ENCODE measurements at regions of chr18 and their contacts with region 1.

Region 1: GRCh38 chr18:48951448-48952286 is 902 bp upstream of the SMAD7 start:
- DNase-seq: peak; percentile 92 to 97 (median 96)
- ATAC-seq: peak; percentile 79 to 82
- H3K4me3 ChIP-seq: peak overlapping the region; percentile 86
- H3K27ac ChIP-seq: peak overlapping the region; percentile 95
- H3K4me1 ChIP-seq: peaks cover 13% of the 10 kb centered on the region
- H3K27me3 ChIP-seq: no peaks in the 10 kb centered on the region

Region 2: GRCh38 chr18:48680339-48681221 is 271.1 kb before region 1 on chr18:
- intact Hi-C with region 1: loop called in 1 of 4 experiments (anchors 5 kb)
- DNase-seq: peak; percentile 95 to 98 (median 97)
- ATAC-seq: peak; percentile 95
- H3K4me3 ChIP-seq: no peak overlapping the region
- H3K27ac ChIP-seq: peak overlapping the region; percentile 93
- H3K4me1 ChIP-seq: peaks cover 24% of the 10 kb centered on the region
- H3K27me3 ChIP-seq: no peaks in the 10 kb centered on the region

Region 3: GRCh38 chr18:48711651-48712486 is 239.8 kb before region 1 on chr18:
- intact Hi-C with region 1: loop called in 2 of 4 experiments (anchors 10 kb)
- DNase-seq: peak; percentile 67 to 83 (median 78)
- ATAC-seq: peak; percentile 69 to 72
- H3K4me3 ChIP-seq: no peak overlapping the region
- H3K27ac ChIP-seq: peak overlapping the region; percentile 39
- H3K4me1 ChIP-seq: peaks cover 32% of the 10 kb centered on the region
- H3K27me3 ChIP-seq: no peaks in the 10 kb centered on the region

Region 4: GRCh38 chr18:48777026-48777743 is 174.5 kb before region 1 on chr18:
- intact Hi-C with region 1: loop called in 3 of 4 experiments (anchors 2 to 5 kb)
- DNase-seq: peak; percentile 68 to 90 (median 89)
- ATAC-seq: peak in 1 of 2 donors; percentile 4
- H3K4me3 ChIP-seq: no peak overlapping the region
- H3K27ac ChIP-seq: peak overlapping the region; percentile 76
- H3K4me1 ChIP-seq: peaks cover 41% of the 10 kb centered on the region
- H3K27me3 ChIP-seq: no peaks in the 10 kb centered on the region

Region 5: GRCh38 chr18:48827291-48828193 is 124.1 kb before region 1 on chr18:
- intact Hi-C with region 1: loop called in 2 of 4 experiments (anchors 10 kb)
- DNase-seq: peak in 2 of 3 donors; percentile 8 to 56
- ATAC-seq: peak; percentile 67 to 69
- H3K4me3 ChIP-seq: peak overlapping the region; percentile 9
- H3K27ac ChIP-seq: peak overlapping the region; percentile 80
- H3K4me1 ChIP-seq: peaks cover 40% of the 10 kb centered on the region
- H3K27me3 ChIP-seq: no peaks in the 10 kb centered on the region

Region 6: DNA sequence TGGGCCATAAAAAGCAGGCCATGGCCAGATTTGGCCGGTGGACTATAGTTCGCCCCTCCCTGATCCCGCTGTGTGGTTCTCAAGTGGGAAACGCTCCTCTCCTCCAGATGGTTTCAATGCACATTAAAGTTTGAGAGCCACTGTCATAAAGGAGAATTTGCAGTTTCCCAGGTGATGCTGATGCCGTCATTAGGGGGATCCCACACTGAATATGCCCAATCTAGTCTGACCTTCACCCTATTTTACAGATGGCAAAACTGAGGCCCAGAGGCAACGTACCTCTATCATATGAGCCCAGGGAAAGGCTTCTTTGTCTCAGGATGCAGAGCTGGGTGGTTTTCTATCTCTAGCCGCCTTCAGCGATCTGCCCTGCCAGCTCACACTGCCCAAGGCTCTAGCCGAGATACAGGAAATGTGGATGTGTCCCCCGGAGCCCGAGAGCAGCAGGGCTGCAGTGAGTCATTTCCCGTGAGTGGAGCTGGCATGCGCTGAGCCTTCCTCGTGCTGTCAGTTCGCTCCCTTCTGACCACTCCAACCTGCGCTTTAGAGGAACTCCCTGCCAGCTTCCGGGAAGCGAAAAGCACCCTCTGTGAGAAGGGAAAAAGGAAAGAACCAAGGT is 117.1 kb before region 1 on chr18:
- intact Hi-C with region 1: loop called in 2 of 4 experiments (anchors 10 kb)
- DNase-seq: peak; percentile 85 to 89 (median 86)
- ATAC-seq: peak; percentile 78 to 87
- H3K4me3 ChIP-seq: no peak overlapping the region
- H3K27ac ChIP-seq: peak overlapping the region; percentile 43
- H3K4me1 ChIP-seq: peaks cover 7% of the 10 kb centered on the region
- H3K27me3 ChIP-seq: no peaks in the 10 kb centered on the region

Region 7: GRCh38 chr18:48913201-48913600 is 38.5 kb before region 1 on chr18:
- intact Hi-C with region 1: no loop called
- DNase-seq: peak in 1 of 3 donors; percentile 43
- ATAC-seq: no peak
- H3K4me3 ChIP-seq: no peak overlapping the region
- H3K27ac ChIP-seq: no peak overlapping the region
- H3K4me1 ChIP-seq: peaks cover 4% of the 10 kb centered on the region
- H3K27me3 ChIP-seq: no peaks in the 10 kb centered on the region

Region 8: GRCh38 chr18:49178736-49179135 is 227.1 kb after region 1 on chr18:
- intact Hi-C with region 1: loop called in 2 of 4 experiments (anchors 10 kb)
- DNase-seq: peak in 1 of 3 donors; percentile 18
- ATAC-seq: peak in 1 of 2 donors; percentile 62
- H3K4me3 ChIP-seq: no peak overlapping the region
- H3K27ac ChIP-seq: no peak overlapping the region
- H3K4me1 ChIP-seq: no peaks in the 10 kb centered on the region
- H3K27me3 ChIP-seq: no peaks in the 10 kb centered on the region

Measured in right cardiac atrium (tissue), 5 donors.